ENCODE measurements at regions of chr11 and their contacts with region 1.

Region 1: DNA sequence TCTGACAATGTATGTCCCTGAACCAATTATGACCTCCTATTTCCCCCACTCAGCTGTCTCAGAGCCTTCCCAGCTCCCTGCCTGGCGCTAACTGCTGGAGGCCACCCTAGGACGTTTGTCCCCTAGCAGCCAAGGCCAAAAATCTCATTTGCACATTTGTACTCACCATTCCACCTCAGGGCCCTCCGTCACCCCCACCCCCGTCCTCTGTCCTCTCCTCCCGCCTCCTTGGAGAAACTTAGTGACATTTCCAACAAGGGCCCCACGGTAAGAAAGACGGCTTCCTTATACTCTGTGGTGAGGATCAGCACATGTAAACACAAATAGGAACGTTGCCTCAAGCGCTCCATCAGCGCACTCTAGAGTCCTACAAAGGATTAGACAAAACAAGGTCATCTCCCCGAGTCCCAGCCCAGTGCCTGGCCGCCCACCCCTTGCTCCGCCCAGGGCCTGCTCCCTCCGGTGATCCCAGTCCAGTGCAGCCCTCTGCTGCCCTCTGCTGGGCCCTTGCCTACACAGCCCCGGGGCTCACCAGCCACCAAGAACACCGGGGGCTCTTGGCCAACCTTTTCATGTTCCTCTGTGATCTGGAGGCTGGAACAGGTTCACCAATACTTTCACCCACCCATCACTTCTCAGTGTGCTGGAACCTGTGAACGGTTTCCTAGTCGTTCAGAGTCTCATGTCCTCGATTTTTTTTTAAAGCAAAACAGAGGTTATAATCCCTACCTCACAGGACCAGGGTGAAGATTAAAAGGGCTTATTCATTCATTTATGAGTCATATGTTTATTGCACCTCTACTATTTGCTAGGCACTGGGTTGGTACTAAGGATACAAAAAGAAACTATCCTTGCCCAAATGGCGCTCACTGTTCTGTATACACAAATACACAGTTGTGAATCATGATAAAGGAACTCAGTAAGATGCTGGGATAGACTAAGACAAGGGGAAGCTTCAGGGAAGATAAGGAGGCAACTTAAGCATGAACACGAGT is 15.3 kb upstream of the CTR9 start:
- DNase-seq: peak; percentile 76
- H3K4me3 Mint-ChIP-seq: no peak overlapping the region
- H3K27ac Mint-ChIP-seq: no peak overlapping the region
- H3K4me1 Mint-ChIP-seq: peaks cover 10% of the 10 kb centered on the region
- H3K27me3 Mint-ChIP-seq: peaks cover 13% of the 10 kb centered on the region

Region 2: GRCh38 chr11:10405855-10406592 is 329.8 kb before region 1 on chr11:
- intact Hi-C with region 1: loop called (anchors 1 kb)
- DNase-seq: no peak
- H3K4me3 Mint-ChIP-seq: no peak overlapping the region
- H3K27ac Mint-ChIP-seq: no peak overlapping the region
- H3K4me1 Mint-ChIP-seq: peaks cover 13% of the 10 kb centered on the region
- H3K27me3 Mint-ChIP-seq: no peaks in the 10 kb centered on the region

Region 3: DNA sequence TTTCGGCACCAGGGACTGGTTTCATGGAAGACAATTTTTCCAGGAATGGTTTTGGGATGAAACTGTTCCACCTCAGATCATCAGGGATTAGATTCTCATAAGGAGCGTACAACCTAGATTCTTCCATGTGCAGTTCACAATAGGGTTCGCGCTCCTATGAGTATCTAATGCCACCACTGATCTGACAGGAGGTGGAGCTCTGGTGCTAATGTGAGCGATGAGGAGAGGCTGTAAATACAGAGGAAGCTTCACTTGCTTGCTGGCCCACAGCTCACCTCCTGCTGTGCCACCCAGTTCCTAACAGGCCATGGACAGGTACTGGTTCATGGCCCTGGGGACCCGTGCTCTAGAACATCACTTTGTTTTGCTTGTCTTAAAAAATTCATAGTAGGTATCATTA is 322.5 kb before region 1 on chr11:
- intact Hi-C with region 1: loop called (anchors 1 kb)
- DNase-seq: no peak
- H3K4me3 Mint-ChIP-seq: no peak overlapping the region
- H3K27ac Mint-ChIP-seq: no peak overlapping the region
- H3K4me1 Mint-ChIP-seq: peaks cover 24% of the 10 kb centered on the region
- H3K27me3 Mint-ChIP-seq: peaks cover 17% of the 10 kb centered on the region

Region 4: DNA sequence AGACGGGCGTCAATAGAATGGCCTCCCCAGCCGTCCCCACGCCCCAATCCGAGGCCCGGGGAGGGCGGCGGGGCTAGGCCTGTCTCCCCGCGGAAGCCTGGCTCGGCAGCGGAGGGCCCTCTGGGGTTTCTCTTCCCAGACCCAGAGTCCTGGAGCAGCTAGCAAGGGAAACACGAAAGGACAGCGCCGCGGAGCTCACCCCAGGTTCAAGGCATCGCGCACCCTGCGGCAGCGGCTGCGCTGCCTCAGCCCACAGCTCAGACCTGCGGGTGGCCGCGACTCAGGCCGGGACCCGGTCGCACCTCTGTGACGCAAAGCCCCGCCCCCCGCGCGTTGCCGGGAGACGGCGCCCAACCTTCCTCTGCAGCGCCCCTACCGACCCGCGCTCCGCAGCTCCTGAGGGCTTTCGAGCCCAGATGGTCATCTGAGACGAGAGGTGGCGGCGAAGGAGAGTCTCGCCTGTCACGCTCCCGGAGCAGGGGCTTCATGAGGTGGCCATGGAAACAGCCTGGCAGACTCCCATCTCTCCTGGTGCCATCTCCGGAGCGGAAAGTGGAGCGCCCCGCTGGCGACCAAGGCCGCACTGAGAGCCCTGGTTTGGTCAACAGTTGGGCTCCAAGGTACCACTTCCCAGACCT is 194.7 kb before region 1 on chr11 and contains the start of gene RNF141:
- intact Hi-C with region 1: loop called (anchors 5 kb)
- DNase-seq: peak; percentile 92
- H3K4me3 Mint-ChIP-seq: peak within 1 kb of the TSS; percentile 89
- H3K27ac Mint-ChIP-seq: peak within 1 kb of the TSS; percentile 60
- H3K4me1 Mint-ChIP-seq: peaks cover 17% of the 10 kb centered on the region
- H3K27me3 Mint-ChIP-seq: peaks cover 1% of the 10 kb centered on the region
- total RNA-seq, gene RNF141: 13.2 and 15.6 TPM in 2 replicates

Region 5: GRCh38 chr11:10564696-10565318 is 171.0 kb before region 1 on chr11:
- intact Hi-C with region 1: no loop called
- DNase-seq: no peak
- H3K4me3 Mint-ChIP-seq: no peak overlapping the region
- H3K27ac Mint-ChIP-seq: no peak overlapping the region
- H3K4me1 Mint-ChIP-seq: no peaks in the 10 kb centered on the region
- H3K27me3 Mint-ChIP-seq: peaks cover 13% of the 10 kb centered on the region

Region 6: DNA sequence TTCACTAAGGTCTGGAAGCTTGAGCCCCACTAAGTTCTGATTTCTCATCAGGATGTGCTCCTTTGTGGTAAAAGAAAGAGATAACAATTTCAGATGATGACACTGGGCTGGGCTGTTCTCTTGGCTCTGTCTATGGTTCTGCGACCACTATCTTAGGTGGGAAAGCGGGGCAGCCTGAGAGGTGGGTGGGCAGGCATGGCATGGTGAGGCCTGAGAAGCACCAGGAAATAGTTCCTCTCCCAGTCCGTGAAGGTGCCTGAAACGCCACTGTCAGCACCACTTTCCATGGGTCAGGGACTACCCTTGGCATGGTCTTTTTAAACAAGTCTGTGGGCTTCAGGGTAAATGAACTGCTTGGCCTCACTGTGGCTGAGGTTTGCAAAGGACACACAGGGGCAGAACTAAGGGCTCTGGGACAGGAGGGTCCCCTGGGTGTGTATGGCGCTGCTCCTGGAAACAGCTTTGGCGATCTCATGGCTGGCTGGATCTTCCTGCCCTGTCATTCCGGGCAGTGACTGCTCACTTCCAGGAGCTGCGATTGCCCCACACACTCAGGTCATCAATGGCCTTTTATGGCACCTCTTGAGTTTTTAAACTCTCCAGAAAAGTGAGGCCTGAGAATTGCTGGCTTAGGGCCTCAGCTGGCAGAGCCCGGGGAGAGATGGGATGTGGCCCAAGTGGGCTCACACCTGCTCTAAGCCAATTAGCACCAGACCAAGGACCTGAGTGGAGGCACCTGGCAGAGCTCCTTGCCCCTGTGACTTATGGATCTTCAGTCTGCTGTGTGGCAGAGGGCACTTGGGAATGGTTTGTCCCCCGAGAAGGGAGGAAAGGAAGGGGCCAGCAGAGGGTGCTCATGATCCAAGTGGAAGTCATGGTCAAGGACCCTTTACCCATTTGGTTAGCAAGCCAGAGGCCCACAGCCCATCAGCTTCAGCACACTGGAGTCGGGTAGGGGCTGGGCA is 111.7 kb before region 1 on chr11:
- intact Hi-C with region 1: loop called (anchors 1 kb)
- DNase-seq: no peak
- H3K4me3 Mint-ChIP-seq: no peak overlapping the region
- H3K27ac Mint-ChIP-seq: peak overlapping the region; percentile 64
- H3K4me1 Mint-ChIP-seq: peaks cover 10% of the 10 kb centered on the region
- H3K27me3 Mint-ChIP-seq: no peaks in the 10 kb centered on the region

Region 7: DNA sequence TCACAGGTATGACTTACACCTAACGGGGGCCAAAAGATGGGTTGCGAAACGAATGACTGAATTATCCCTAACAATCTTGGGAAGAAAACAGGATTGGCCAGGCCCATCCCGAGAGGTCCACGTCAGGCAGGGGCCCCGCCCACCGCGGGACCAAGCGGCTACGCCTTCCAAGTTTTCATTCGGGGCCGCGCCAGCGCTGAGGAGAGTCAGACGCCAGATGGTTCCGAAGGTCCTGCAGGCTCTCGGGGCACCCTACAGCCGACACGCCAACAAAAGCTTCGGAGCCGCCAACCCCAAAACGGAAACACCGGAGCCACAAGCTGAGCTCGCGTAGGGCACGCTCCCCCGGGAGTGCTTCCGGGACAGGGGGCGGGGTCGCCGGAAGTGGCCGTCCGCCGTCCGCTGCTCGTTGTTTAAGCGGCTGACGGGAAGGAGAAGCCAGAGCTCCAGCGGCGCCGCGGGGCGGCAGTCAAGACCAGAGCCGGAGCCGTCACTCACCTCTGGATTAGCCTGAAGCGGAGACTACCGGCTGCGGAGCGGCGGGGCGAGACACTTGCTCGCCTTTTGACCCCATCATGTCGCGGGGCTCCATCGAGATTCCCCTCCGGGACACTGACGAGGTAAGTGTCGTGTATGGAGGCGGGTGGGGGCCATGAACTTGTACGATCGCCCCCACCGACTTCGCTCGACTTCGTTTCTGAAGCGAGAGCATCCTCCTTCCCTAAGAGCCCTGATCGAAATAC is 15.2 kb after region 1 on chr11 and contains the start of gene CTR9:
- intact Hi-C with region 1: no loop called
- DNase-seq: peak; percentile 91
- H3K4me3 Mint-ChIP-seq: peak within 1 kb of the TSS; percentile 92
- H3K27ac Mint-ChIP-seq: peak within 1 kb of the TSS; percentile 86
- H3K4me1 Mint-ChIP-seq: peaks cover 32% of the 10 kb centered on the region
- H3K27me3 Mint-ChIP-seq: no peaks in the 10 kb centered on the region
- total RNA-seq, gene CTR9: 41.5 and 43.5 TPM in 2 replicates

Region 8: GRCh38 chr11:11192541-11192940 is 456.8 kb after region 1 on chr11:
- intact Hi-C with region 1: no loop called
- DNase-seq: no peak
- H3K4me3 Mint-ChIP-seq: no peak overlapping the region
- H3K27ac Mint-ChIP-seq: no peak overlapping the region
- H3K4me1 Mint-ChIP-seq: no peaks in the 10 kb centered on the region
- H3K27me3 Mint-ChIP-seq: peaks cover 3% of the 10 kb centered on the region

Region 9: GRCh38 chr11:11584446-11584810 is 848.6 kb after region 1 on chr11:
- intact Hi-C with region 1: no loop called
- DNase-seq: no peak
- H3K4me3 Mint-ChIP-seq: no peak overlapping the region
- H3K27ac Mint-ChIP-seq: no peak overlapping the region
- H3K4me1 Mint-ChIP-seq: no peaks in the 10 kb centered on the region
- H3K27me3 Mint-ChIP-seq: peaks cover 9% of the 10 kb centered on the region

Measured in activated T-helper 2 cell treated with anti-CD3 and anti-CD28 coated beads, Interferon-gamma antibody, Interleukin-2, Interleukin-4, amounts not matched to agents 10 μg/mL and 5 μg/mL and 100 μg/mL, durations not matched to agents 14 hours and 24 hours and 36 hours (primary cell).